ENCODE measurements at regions of chr10 and their contacts with region 1.

Region 1: DNA sequence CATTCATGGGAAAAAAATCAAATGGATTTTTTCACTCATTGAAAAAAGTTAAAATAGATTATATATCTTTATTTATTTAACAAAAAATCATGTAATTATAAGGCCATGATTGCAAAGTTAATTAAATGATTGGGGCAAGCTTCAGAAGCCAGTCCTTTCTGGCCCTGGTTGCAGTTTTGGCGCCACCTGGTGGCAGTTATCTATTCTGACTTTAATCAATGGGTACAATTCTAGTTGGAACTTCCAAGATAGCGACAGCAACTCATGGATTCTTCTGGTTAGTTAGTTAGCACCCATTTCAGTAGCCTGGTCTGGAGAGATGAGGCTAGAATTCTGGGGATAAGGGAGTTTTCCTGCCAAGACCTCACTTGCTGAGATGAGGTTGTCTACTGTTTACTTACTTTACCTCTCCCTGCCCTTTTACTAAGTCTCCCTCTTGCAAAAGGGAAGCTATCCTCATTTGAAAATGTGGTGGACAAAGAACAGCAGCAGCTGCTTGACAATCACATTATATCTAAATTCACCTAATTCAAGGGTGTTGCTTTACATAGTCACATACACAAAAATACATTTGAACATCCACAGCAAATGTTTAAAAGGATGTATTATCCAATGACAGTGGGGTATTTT is 42.3 kb downstream of the NOC3L start:
- DNase-seq: peak in 33 of 35 experiments; percentile 2 to 75 (median 42)
- ATAC-seq: peak in 1 of 4 experiments; percentile 34
- H3K4me3 ChIP-seq: no peak overlapping the region
- H3K4me3 Mint-ChIP-seq: no peak overlapping the region
- H3K27ac ChIP-seq: no peak overlapping the region
- H3K27ac Mint-ChIP-seq: no peak overlapping the region
- H3K4me1 ChIP-seq: no peaks in the 10 kb centered on the region
- H3K4me1 Mint-ChIP-seq: no peaks in the 10 kb centered on the region
- H3K27me3 ChIP-seq: no peaks in the 10 kb centered on the region
- H3K27me3 Mint-ChIP-seq: no peaks in the 10 kb centered on the region

Region 2: DNA sequence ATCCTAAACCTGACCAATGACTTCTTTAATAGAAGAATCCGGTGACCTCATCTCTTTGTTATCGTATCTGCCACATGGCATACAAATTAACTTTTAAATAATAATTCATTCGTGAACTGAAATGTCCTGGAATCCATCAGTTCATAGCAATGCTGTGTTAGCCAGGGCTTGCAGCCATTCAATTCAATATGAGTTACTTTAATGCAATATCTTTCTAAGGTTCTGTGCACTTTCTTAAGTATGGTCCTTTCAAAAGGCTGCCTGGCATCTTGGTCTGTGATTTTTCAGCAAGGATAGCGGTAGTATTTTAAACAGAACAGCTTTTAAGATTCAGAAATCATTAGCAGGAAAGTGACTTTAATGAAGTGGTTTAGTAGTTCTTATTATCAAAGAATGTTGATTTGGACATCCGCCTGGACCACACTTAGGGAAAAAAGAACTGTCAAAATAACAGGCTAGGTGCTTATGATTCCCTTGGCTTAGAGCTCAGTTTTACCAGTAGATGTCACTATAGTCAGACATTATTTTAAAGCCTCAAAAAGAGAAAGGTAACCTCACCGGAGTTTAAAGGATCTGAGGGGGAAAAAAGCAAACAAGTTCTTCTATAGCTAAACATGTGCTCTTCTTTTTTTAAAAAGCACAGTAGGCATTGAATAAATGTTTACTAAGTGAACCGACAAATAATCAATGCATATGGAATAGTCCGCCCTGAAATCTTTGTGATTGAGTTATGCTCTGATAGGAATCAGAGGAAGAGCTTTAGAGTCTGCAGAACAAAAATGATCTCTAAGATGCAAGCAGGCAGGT is 403.9 kb before region 1 on chr10:
- CTCF ChIA-PET with region 1: interaction called, 5 to 16 read pairs
- POLR2A ChIA-PET with region 1: no interaction called
- DNase-seq: peak in 1 of 35 experiments; percentile 6
- ATAC-seq: no peak
- H3K4me3 ChIP-seq: no peak overlapping the region
- H3K4me3 Mint-ChIP-seq: peak overlapping the region in 1 of 3 donors; percentile 16
- H3K27ac ChIP-seq: no peak overlapping the region
- H3K27ac Mint-ChIP-seq: no peak overlapping the region
- H3K4me1 ChIP-seq: no peaks in the 10 kb centered on the region
- H3K4me1 Mint-ChIP-seq: peaks cover 0 to 5% (median 0%) of the 10 kb centered on the region in 3 donors
- H3K27me3 ChIP-seq: no peaks in the 10 kb centered on the region
- H3K27me3 Mint-ChIP-seq: no peaks in the 10 kb centered on the region

Region 3: GRCh38 chr10:94333051-94333450 is 12.7 kb after region 1 on chr10:
- CTCF ChIA-PET with region 1: interaction called, 4 to 18 read pairs
- POLR2A ChIA-PET with region 1: interaction called in 1 of 2 experiments, 4 read pairs
- DNase-seq: no peak
- ATAC-seq: no peak
- H3K4me3 ChIP-seq: no peak overlapping the region
- H3K4me3 Mint-ChIP-seq: no peak overlapping the region
- H3K27ac ChIP-seq: no peak overlapping the region
- H3K27ac Mint-ChIP-seq: no peak overlapping the region
- H3K4me1 ChIP-seq: no peaks in the 10 kb centered on the region
- H3K4me1 Mint-ChIP-seq: no peaks in the 10 kb centered on the region
- H3K27me3 ChIP-seq: no peaks in the 10 kb centered on the region
- H3K27me3 Mint-ChIP-seq: no peaks in the 10 kb centered on the region